Right ventricle myocardium superior (tissue), 1 donor: ENCODE measurements at regions of chr2 and their contacts with region 1.

Region 1: DNA sequence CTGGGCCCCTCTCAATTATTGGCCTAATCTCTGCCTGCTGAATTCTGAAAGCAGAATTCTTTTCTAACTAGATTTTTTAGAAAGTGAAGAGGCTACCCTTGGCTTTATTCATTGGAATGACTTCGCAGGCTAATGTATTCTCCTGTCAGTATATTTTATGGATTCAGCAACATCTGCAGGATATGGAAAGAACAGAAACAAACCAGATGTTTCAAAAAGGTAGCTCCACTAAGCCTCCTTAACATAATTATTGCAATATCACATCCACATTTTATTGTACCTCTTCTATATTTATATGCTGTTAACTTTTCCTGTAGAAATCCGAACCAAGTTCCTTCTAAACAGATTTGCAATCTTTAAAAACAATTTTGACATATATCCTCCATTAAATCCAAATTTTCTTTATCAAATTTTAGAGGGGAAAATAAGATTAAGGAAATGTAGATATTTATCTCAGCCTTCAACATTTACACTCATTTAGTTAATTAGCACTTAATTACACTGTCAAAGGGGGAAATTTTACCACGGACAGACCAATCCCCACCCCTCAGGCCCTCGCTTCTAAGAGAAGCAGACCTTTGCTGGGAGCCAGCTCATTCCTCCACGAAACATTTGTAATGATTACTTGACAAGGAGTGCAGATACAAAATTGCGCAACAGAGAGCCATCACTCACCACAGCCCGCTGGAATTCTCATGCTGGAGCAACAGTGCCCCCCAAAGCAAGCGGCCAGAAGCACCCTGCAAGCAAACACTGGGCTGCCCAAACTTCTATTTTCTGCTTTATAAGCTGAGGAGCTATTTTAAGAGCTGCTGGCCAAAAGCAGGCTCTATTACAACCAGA is 253.4 kb downstream of the ETAA1 start:
- DNase-seq: peak; percentile 86
- ATAC-seq: peak; percentile 92

Region 2: GRCh38 chr2:66587216-66587615 is 1063.3 kb before region 1 on chr2:
- intact Hi-C with region 1: loop called (anchors 10 kb)
- DNase-seq: no peak
- ATAC-seq: no peak

Region 3: DNA sequence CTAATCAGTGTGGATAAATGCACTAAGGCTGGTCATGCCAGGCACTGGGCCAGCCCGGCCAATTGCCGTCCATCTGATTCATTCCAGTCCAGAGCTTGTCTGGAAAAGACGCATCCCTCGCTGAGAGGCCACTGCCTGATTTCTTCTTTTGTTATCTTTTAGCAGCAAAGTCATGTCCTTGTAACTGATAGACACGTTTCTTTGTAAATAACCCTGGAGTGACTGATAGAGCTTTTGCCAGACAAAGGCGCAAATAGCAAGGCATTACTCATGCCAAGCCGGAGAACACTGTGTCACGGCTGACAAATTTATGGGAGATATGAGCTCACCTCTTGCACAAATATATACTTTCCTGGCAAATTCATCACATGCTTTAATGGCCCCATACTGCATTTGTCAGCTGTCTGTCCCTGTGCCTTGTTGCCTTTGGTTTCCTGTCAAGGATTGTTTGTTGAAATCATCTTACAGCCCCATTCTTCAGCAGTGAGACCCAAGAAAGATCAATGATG is 89.0 kb before region 1 on chr2:
- intact Hi-C with region 1: loop called (anchors 10 kb)
- DNase-seq: peak; percentile 82
- ATAC-seq: peak; percentile 90

Region 4: DNA sequence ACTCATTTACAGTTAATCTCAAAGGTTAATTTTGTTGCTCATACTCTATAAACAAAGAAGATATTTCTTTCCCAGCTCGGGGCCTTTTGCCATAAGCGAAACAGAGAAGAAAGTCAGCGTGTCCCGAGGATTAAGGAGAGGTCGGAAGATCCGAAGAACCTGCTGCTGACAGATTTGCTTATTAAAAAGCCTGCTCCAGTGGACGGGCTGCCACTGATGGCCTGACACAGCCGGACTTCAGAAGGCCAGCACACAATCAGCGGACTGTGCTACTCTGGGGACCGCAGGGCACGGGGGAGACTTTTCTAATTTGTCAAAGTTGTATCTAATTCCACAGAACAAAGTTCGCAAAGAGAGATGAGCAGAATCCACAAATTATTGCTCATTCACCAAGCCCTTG is 62.0 kb after region 1 on chr2:
- intact Hi-C with region 1: no loop called
- DNase-seq: no peak
- ATAC-seq: no peak

Region 5: DNA sequence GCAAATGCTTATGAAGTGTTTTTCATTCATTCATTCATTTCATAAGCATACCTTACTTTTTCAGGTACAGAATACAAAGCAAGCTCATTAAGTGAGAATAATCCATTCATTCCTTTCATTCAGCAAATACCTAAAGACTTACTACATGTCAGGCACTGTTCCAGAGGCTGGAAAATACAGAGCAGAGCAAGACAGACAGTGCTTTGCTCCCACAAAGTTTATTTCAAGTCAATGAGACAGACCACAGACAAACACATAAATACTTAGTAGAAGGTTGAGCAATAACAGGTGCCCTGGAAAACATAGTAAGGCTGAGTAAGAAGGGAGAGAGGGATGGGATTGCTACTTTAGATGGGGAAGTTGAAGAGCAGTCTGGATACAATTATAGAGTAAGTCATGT is 102.5 kb after region 1 on chr2:
- intact Hi-C with region 1: no loop called
- DNase-seq: no peak
- ATAC-seq: no peak

Region 6: DNA sequence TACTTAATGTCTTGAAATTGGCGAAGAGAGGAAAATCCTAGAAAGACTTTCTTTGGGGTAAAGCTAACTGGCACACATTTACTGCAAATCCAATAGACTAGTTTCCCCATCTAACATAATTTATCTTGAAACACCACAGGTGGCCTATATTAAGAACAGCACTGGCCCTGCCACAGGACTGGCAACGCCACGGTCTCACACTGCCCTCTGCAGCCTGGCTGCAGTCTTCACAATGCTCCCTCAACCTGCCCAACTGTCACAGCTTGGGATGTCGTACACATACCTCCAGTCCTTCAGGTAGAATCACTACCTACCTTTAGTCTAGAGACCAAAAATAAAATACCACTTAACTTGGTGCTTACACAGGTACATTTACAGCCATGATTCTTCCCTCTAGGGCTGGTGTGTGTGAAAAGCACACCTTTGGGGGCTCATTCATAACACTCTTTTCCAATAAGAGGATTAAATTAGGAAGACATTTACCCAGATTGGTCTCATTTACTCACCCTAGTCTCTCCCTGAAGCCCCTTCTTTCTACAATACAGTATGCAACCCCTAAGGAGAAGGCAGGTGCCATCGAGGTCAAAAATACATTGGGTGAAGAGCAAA is 190.1 kb after region 1 on chr2:
- intact Hi-C with region 1: loop called (anchors 10 kb)
- DNase-seq: peak; percentile 75
- ATAC-seq: peak; percentile 98